Activated CD8-positive, alpha-beta T cell treated with anti-CD3 and anti-CD28 coated beads, Interleukin-2, amount 10 ng/mL, durations not matched to agents 7 days and 5 days (primary cell): ENCODE measurements at regions of chr6 and their contacts with region 1.

Region 1: DNA sequence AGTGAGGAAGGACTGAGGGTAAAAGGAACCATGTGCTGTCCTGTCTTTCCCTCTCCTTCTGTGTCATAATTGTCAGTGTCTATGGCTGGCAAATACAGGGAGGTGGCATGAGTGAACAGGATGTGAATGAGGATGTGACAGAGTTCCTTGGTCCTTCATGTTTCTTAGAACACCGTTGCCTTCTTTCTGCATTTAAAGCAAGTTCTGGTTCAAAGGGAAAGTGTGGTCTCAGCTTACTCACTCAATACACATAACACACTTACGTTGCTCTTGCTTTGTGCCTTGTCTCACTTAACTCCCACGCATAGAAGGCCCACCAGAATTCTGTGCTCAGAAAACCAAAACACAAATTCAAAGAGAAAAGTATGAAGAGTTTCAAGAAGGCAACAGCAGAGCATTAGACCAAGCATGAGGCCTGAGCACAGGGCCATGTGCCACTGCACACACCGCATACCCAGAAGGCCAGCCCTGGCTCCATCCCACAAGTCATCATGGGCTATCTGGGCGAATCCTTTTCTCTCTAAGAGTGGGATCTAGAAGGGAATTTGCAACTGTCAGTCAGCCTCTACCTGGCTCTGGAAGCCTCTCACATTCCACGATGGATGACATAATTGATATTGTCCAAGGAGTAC is 38.9 kb upstream of the SAYSD1 start:
- DNase-seq: peak; percentile 28
- ATAC-seq: peak; percentile 60
- H3K4me3 Mint-ChIP-seq: no peak overlapping the region
- H3K27ac Mint-ChIP-seq: peak overlapping the region; percentile 30
- H3K4me1 Mint-ChIP-seq: peaks cover 21% of the 10 kb centered on the region
- H3K27me3 Mint-ChIP-seq: peaks cover 17% of the 10 kb centered on the region

Region 2: GRCh38 chr6:39166189-39166911 is 12.5 kb after region 1 on chr6:
- CTCF ChIA-PET with region 1: interaction called, 11 read pairs
- POLR2A ChIA-PET with region 1: no interaction called
- DNase-seq: peak; percentile 89
- ATAC-seq: peak; percentile 96
- H3K4me3 Mint-ChIP-seq: no peak overlapping the region
- H3K27ac Mint-ChIP-seq: peak overlapping the region; percentile 33
- H3K4me1 Mint-ChIP-seq: peaks cover 9% of the 10 kb centered on the region
- H3K27me3 Mint-ChIP-seq: peaks cover 2% of the 10 kb centered on the region